Dorsolateral prefrontal cortex (tissue), 120 donors: ENCODE measurements at regions of chr1 and their contacts with region 1.

Region 1: DNA sequence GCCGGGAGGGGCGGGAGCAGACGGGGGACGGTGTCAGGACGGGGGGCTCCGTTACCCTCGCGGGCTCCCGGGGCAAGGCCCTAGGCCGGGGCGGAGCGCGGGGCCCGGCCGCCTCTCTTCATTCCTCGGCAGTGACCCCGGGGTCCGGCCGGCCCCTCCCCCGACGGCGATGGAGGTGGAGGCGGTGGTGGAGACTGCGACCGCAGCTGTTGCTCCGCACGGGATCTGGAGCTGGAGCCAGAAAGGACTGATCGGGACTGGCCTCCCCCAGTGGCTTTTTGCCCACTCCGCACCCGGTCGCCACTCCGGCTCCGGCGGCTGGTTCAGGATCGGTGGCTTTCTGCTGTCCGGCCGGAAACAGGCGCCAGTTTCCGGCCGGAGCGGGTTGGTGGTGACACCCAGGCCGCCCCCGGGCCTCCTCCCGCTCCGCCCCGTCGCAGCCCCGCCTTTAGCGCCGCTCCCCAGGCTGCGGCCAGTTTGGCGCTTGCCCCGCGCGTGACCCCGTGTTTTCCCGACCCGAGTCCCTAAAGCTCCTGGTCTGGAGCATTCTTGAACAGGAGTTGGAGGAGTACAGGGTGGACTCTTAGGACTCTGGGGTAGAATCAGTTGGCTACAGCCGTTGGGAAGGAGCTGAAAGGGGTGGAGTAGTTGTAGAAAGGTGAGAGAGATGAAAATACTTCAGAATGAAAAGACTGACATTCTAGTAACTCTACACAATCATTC is at the start of gene OTUD7B:
- DNase-seq: peak; percentile 75 to 93 (median 84)
- H3K4me3 ChIP-seq: peak within 1 kb of the TSS; percentile 69 to 97 (median 88)
- H3K27ac ChIP-seq: peak within 1 kb of the TSS; percentile 68 to 100 (median 97)
- H3K27me3 ChIP-seq: no peaks in the 10 kb centered on the region
- CTCF ChIP-seq: peak in 41 of 56 donors; percentile 1 to 54 (median 32)
- total RNA-seq, gene OTUD7B: 28.4 to 126 (median 52.8) TPM

Region 2: GRCh38 chr1:149962123-149962548 is 48.4 kb before region 1 on chr1:
- intact Hi-C with region 1: loop called (anchors 2 to 5 kb)
- DNase-seq: peak in 4 of 10 donors; percentile 52 to 70 (median 62)
- H3K4me3 ChIP-seq: peak overlapping the region in 2 of 59 donors; percentile 2 to 11
- H3K27ac ChIP-seq: peak overlapping the region in 56 of 59 donors; percentile 24 to 91 (median 78)
- H3K27me3 ChIP-seq: no peaks in the 10 kb centered on the region
- CTCF ChIP-seq: peak; percentile 80 to 97 (median 88)